ENCODE measurements at regions of chr16 and their contacts with region 1.

Region 1: DNA sequence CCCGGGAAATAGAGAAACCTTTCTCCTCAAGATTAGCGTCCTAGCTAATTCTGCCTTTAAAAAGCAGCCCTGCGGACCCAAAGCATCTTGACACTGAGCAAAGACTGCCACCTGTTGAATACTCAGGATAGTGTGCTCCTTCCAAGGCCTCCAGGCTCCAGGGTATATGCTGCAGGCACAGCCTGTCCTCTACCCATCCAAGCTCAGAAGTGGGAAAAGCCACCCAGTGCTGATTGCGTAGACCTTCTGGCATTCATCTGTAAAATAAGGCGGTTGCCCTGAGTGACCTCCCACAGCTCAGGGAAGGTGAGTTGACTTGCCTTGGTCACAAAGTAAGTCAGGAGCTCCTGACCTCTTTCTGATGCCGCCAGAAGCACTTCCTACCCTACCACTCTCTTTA is 456.1 kb upstream of the DYNLRB2 start:
- DNase-seq: peak; percentile 40 to 67 (median 50)
- ATAC-seq: peak; percentile 99
- H3K4me3 ChIP-seq: no peak overlapping the region
- H3K27ac ChIP-seq: no peak overlapping the region
- H3K4me1 ChIP-seq: peaks cover 0 to 6% of the 10 kb centered on the region in 2 experiments; a peak in 3 of 5 replicates
- H3K27me3 ChIP-seq: no peaks in the 10 kb centered on the region
- CTCF ChIP-seq: peak; percentile 76 to 90 (median 76)
- EP300 ChIP-seq: 0 out of 2 replicates have a peak, but pooled peaks have one; percentile 5
- POLR2A ChIP-seq: no peak
- RAD21 ChIP-seq: peak; percentile 91 to 96

Region 2: DNA sequence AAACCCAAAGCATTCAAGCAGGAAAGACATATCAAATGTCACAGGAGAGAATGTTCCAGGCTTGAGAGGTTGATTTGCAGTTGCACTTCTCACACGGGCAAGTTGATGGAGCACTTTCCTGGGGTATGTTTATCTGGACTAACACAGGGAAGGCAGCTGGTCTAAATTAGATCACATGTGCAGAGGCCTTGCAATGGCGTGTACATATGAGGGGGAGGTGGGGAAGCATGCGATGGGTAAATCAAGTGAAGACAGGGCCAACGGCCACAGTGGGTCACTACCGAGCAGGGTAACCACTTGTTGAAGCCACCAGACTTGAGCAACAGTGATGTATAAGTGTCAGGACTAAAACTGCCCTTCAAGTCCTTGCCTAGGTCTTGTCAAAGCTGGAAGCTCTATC is 327.5 kb before region 1 on chr16:
- CTCF ChIA-PET with region 1: interaction called, 8 read pairs
- POLR2A ChIA-PET with region 1: no interaction called
- in situ Hi-C with region 1: no loop called
- intact Hi-C with region 1: loop called (anchors 1 kb)
- DNase-seq: peak in 2 of 4 experiments; percentile 27 to 60
- ATAC-seq: peak; percentile 95
- H3K4me3 ChIP-seq: no peak overlapping the region
- H3K27ac ChIP-seq: no peak overlapping the region; the same call in 2 of the 3 replicates
- H3K4me1 ChIP-seq: peaks cover 0 to 16% of the 10 kb centered on the region in 2 experiments; a peak in 2 of 5 replicates
- H3K27me3 ChIP-seq: no peaks in the 10 kb centered on the region
- CTCF ChIP-seq: peak; percentile 51 to 69 (median 60); a peak in 5 of 6 replicates
- EP300 ChIP-seq: peak; percentile 33; the same call in 1 of the 2 replicates
- POLR2A ChIP-seq: no peak
- RAD21 ChIP-seq: peak; percentile 79; a peak in 3 of 4 replicates

Region 3: DNA sequence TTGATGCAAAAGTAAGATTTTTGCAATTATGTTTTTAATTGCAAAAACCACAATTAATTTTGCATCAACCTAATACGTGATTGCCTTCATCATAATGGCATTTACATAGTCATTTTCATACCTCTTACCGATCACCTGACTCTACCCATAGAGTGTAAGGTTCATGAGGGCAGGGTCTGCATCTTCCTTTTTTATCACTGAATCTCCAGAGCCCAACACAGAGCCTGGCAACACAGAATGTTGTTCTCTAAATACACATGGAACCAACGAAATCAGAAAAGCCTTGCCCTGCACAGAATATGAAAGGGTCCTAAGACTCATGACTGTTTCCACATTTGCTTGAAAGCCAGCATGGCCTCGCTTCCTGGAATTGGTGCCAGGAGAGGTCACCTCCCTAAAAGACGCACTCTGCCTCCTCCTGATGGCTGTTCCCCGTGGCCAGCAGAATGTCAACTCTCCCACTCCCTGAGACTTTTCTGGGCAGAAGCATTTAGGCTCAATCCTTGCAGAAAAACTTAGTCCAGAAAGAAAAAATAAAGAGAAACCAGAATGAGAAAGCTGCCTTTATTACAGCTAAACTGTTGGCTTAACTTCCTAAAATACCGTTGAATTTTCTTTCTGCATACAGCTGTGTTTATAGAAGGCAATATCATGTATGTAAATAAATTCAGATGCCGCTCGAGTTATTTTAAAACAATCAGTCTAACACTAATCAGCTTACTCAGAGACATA is 156.4 kb before region 1 on chr16:
- CTCF ChIA-PET with region 1: interaction called, 3 read pairs
- POLR2A ChIA-PET with region 1: no interaction called
- in situ Hi-C with region 1: no loop called
- intact Hi-C with region 1: loop called (anchors 10 kb)
- DNase-seq: no peak
- ATAC-seq: no peak
- H3K4me3 ChIP-seq: no peak overlapping the region
- H3K27ac ChIP-seq: no peak overlapping the region
- H3K4me1 ChIP-seq: no peaks in the 10 kb centered on the region; a peak in 1 of 5 replicates
- H3K27me3 ChIP-seq: no peaks in the 10 kb centered on the region
- CTCF ChIP-seq: no peak
- EP300 ChIP-seq: no peak
- POLR2A ChIP-seq: no peak
- RAD21 ChIP-seq: no peak

Region 4: GRCh38 chr16:80015566-80015965 is 69.1 kb before region 1 on chr16:
- CTCF ChIA-PET with region 1: no interaction called
- POLR2A ChIA-PET with region 1: no interaction called
- in situ Hi-C with region 1: no loop called
- intact Hi-C with region 1: loop called (anchors 5 kb)
- DNase-seq: no peak
- ATAC-seq: no peak
- H3K4me3 ChIP-seq: no peak overlapping the region
- H3K27ac ChIP-seq: no peak overlapping the region
- H3K4me1 ChIP-seq: no peaks in the 10 kb centered on the region; a peak in 1 of 5 replicates
- H3K27me3 ChIP-seq: no peaks in the 10 kb centered on the region
- CTCF ChIP-seq: no peak
- EP300 ChIP-seq: no peak
- POLR2A ChIP-seq: no peak
- RAD21 ChIP-seq: no peak

Region 5: GRCh38 chr16:80114699-80115098 is 30.0 kb after region 1 on chr16:
- CTCF ChIA-PET with region 1: no interaction called
- POLR2A ChIA-PET with region 1: no interaction called
- in situ Hi-C with region 1: no loop called
- intact Hi-C with region 1: no loop called
- DNase-seq: no peak
- ATAC-seq: no peak
- H3K4me3 ChIP-seq: no peak overlapping the region
- H3K27ac ChIP-seq: no peak overlapping the region
- H3K4me1 ChIP-seq: no peaks in the 10 kb centered on the region
- H3K27me3 ChIP-seq: peaks cover 2 to 19% of the 10 kb centered on the region in 2 experiments; a peak in 3 of 5 replicates
- CTCF ChIP-seq: no peak
- EP300 ChIP-seq: no peak
- POLR2A ChIP-seq: no peak
- RAD21 ChIP-seq: no peak

Measured in K562 (cell line).